ENCODE measurements at regions of chr6 and their contacts with region 1.

Region 1: GRCh38 chr6:73732845-73733675 is 37.1 kb downstream of the CD109 start:
- DNase-seq: peak; percentile 93
- H3K4me3 Mint-ChIP-seq: no peak overlapping the region
- H3K27ac Mint-ChIP-seq: no peak overlapping the region
- H3K4me1 Mint-ChIP-seq: peaks cover 31% of the 10 kb centered on the region
- H3K27me3 Mint-ChIP-seq: no peaks in the 10 kb centered on the region

Region 2: DNA sequence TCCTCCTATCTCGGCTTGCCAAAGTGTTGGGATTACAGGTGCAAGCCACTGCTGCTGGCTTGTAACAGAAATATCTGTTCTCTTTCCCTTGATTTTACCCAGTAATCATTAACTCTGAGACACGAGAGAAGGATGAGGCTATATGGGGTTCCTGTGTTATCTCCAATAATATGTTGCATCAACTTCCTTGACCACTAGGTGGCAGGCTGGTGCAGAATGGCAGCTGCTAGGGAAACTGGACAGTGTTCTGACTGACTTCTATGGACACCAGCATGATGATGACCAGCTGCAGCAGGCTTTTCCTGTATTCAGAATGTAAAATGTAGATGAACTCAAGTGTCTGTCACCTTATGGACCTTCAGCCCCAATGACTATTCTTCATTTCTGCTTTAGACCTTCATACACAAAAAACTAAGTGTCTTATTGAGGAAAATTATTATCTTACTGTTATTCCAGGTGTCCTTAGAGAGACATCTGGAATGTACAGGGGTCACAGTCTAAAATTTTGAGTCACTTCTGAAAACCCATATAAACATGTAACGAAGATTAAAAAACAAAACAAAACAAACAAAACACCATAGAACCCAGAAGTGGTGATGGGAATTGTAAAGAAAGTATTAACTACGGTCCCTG is 57.5 kb before region 1 on chr6:
- intact Hi-C with region 1: loop called (anchors 1 kb)
- DNase-seq: peak; percentile 93
- H3K4me3 Mint-ChIP-seq: no peak overlapping the region
- H3K27ac Mint-ChIP-seq: no peak overlapping the region
- H3K4me1 Mint-ChIP-seq: no peaks in the 10 kb centered on the region
- H3K27me3 Mint-ChIP-seq: peaks cover 18% of the 10 kb centered on the region

Region 3: GRCh38 chr6:73774311-73774787 is 41.3 kb after region 1 on chr6:
- intact Hi-C with region 1: no loop called
- DNase-seq: no peak
- H3K4me3 Mint-ChIP-seq: no peak overlapping the region
- H3K27ac Mint-ChIP-seq: no peak overlapping the region
- H3K4me1 Mint-ChIP-seq: peaks cover 8% of the 10 kb centered on the region
- H3K27me3 Mint-ChIP-seq: no peaks in the 10 kb centered on the region